Dorsolateral prefrontal cortex (tissue), 120 donors: ENCODE measurements at regions of chr13 and their contacts with region 1.

Region 1: GRCh38 chr13:53782488-53782961 is 753.9 kb downstream of the OLFM4 start:
- DNase-seq: peak in 6 of 10 donors; percentile 6 to 64 (median 40)
- H3K4me3 ChIP-seq: peak overlapping the region in 57 of 59 donors; percentile 15 to 64 (median 45)
- H3K27ac ChIP-seq: peak overlapping the region in 10 of 59 donors; percentile 15 to 75 (median 42)
- H3K27me3 ChIP-seq: peaks cover 0 to 4% (median 0%) of the 10 kb centered on the region in 45 donors
- CTCF ChIP-seq: peak; percentile 70 to 94 (median 84)

Region 2: GRCh38 chr13:53490752-53491151 is 291.8 kb before region 1 on chr13:
- intact Hi-C with region 1: no loop called
- DNase-seq: no peak
- H3K4me3 ChIP-seq: no peak overlapping the region
- H3K27ac ChIP-seq: no peak overlapping the region
- H3K27me3 ChIP-seq: no peaks in the 10 kb centered on the region
- CTCF ChIP-seq: no peak

Region 3: GRCh38 chr13:53848366-53848961 is 65.9 kb after region 1 on chr13:
- intact Hi-C with region 1: no loop called
- DNase-seq: no peak
- H3K4me3 ChIP-seq: no peak overlapping the region
- H3K27ac ChIP-seq: no peak overlapping the region
- H3K27me3 ChIP-seq: no peaks in the 10 kb centered on the region
- CTCF ChIP-seq: no peak

Region 4: GRCh38 chr13:54536112-54536511 is 753.6 kb after region 1 on chr13:
- intact Hi-C with region 1: loop called in 1 of 2 experiments (anchors 10 kb)
- DNase-seq: no peak
- H3K4me3 ChIP-seq: peak overlapping the region in 4 of 59 donors; percentile 3 to 26 (median 18)
- H3K27ac ChIP-seq: no peak overlapping the region
- H3K27me3 ChIP-seq: no peaks in the 10 kb centered on the region
- CTCF ChIP-seq: peak in 46 of 56 donors; percentile 6 to 60 (median 38)